BJ (cell line): ENCODE measurements at regions of chr14 and their contacts with region 1.

Region 1: DNA sequence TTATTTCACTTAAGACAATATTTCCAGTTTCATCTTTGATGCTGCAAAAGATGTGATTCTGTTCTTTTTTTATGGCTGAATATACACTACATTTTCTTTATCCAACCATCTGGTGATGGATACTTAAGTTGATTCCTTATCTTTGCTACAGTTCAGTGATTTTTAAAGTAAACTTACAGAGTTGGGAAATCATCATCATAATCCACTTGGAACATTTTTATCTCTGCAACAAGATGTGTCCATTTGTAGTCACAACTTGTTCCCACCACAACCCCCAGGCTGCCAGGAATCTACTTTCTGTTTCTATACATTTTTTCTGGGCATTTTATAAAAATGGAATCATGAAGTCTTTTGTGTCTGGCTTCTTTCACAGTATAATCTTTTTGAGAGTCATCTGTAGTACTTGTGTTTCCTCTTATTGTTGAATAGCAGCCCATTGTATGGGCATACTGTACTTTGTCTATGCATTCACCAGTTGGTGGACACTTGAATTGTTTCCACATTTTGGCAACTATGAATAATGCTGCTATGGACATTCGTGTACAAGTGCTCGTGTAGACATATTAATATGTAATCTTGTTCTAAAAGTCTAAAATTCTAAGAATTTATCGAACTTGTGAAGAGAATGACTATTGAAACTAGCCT is 212.5 kb upstream of the DDHD1 start:
- DNase-seq: no peak
- H3K4me3 ChIP-seq: no peak overlapping the region
- H3K27me3 ChIP-seq: no peaks in the 10 kb centered on the region
- CTCF ChIP-seq: no peak

Region 2: GRCh38 chr14:53346988-53347387 is 18.6 kb before region 1 on chr14:
- CTCF ChIA-PET with region 1: no interaction called
- POLR2A ChIA-PET with region 1: no interaction called
- DNase-seq: no peak
- H3K4me3 ChIP-seq: no peak overlapping the region
- H3K27me3 ChIP-seq: 0 out of 2 replicates have a peak, but pooled peaks cover 2% of the 10 kb centered on the region
- CTCF ChIP-seq: no peak

Region 3: DNA sequence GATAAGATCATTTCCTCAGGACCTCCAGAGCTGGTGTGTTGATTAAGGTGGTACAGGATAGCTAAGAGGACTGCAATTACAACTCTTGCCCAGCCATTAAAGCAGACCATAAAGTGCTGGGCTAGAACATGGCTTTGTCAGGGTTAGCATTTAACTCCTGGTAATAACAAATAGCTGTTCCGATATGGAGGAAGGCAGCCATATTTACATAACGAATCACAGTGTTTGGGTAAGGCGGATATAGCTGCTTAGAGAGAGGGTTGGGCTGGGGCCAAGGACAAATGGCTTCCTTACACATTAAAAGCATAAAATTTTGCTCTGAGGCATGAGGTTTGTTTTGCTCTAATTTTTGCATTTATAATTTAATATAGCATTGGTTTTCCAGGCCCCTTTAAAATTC is 85.3 kb after region 1 on chr14:
- CTCF ChIA-PET with region 1: no interaction called
- POLR2A ChIA-PET with region 1: interaction called, 17 read pairs
- DNase-seq: no peak
- H3K4me3 ChIP-seq: no peak overlapping the region
- H3K27me3 ChIP-seq: no peaks in the 10 kb centered on the region
- CTCF ChIP-seq: no peak